Posterior vena cava (tissue), 2 donors: ENCODE measurements at regions of chr9 and their contacts with region 1.

Region 1: DNA sequence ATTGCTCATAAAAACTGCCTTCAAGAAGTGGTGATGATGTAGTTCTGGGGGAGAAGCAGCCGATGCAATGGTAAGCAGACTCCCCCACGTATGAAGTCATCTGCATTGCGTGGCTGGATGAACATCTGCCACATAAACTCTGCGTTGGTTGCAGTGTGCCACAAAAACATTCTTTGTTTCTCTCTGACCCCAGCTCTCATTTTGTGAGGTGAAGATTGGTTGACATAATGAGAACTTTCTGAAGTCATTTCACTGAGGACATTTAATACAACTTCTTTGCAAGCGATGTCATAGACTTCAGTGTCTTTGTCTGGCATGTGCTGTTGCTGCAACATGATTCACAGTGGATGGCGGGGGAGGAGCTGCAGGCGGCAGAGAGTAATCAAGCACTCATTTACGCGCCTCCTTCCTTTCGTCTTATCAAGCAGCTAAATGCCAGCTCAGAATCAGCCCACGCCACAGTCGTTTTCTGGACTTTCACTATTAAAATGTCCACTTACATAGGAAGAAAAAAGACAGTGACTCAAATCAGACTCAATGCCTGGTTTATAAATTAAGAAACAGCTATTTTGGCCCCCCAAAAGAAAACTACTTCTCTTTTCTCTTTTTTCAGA is 91.5 kb upstream of the NFIL3 start:
- DNase-seq: no peak

Region 2: DNA sequence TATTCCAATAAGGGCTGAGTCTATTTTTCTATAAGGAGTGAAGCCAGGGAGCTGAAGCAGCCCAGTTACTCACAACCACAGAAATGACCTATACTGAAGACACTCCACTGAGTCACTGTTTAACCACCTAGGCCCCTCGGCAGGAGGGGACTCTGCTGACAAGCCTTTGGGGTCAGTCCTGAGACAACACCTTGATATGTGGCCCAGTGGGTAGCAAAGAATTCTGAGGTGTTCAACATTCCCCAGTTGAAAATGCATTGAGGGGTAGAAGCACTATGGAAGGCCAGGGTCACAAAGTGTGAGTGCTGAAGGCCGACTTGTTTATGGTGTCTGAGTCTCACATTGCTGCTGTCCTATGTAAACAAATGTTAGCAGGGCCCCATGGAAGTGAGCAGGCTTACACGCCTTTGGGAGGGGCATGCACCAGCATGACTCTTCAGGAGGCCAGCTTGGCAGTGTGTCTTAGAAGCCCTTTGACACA is 21.1 kb after region 1 on chr9:
- intact Hi-C with region 1: loop called in 1 of 2 experiments (anchors 1 kb)
- DNase-seq: no peak